Upper lobe of right lung (tissue), 1 donor: ENCODE measurements at regions of chr3 and their contacts with region 1.

Region 1: GRCh38 chr3:127959846-127960245 is 44.8 kb downstream of the KBTBD12 start:
- DNase-seq: no peak
- ATAC-seq: peak; percentile 74
- H3K4me3 ChIP-seq: no peak overlapping the region
- H3K27ac ChIP-seq: no peak overlapping the region
- H3K4me1 ChIP-seq: no peaks in the 10 kb centered on the region
- H3K27me3 ChIP-seq: no peaks in the 10 kb centered on the region
- CTCF ChIP-seq: peak; percentile 46

Region 2: GRCh38 chr3:127667119-127667681 is 292.6 kb before region 1 on chr3:
- intact Hi-C with region 1: loop called (anchors 10 kb)
- DNase-seq: peak; percentile 52
- ATAC-seq: no peak
- H3K4me3 ChIP-seq: no peak overlapping the region
- H3K27ac ChIP-seq: no peak overlapping the region
- H3K4me1 ChIP-seq: peaks cover 7% of the 10 kb centered on the region
- H3K27me3 ChIP-seq: no peaks in the 10 kb centered on the region
- CTCF ChIP-seq: no peak

Region 3: DNA sequence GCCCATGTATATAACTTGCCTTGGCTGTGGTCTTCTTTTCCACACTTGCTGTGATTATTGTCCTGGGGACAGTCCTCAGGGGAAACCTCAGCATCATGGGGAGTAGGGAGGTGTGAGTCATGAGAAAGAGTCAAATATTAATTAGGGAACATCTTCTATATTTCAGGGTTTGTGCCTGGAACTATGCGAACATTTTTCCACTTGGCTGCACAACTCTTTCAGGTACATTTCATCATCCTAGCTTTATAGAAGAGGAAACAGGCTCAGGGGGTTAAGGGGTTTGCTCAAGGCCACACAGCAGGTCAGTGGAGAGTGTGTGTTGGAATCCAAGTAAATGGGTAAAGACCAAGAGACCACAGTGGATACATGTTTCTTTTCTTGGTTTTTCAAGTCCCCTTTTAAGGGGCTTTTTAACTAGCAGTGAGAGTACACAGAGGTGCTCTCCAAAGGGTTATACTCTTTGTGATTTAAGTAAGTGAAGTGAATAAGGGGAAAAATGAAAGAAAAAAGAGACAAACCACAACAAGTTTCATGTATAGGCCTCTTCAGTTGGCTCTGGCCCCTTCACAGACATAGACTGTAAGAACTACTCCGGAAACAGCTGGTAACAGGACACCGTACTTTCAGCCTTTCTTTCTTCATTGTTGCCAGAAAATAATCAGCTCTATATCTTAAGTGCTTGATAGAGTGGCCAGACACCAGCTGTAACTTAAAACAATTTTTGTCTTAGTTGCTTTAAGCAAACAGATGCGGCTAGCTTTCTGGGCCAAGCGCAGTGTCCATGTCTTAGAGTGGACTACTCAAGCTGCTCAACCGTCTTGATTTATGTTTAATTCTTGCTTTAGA is 258.1 kb after region 1 on chr3:
- intact Hi-C with region 1: no loop called
- DNase-seq: no peak
- ATAC-seq: no peak
- H3K4me3 ChIP-seq: no peak overlapping the region
- H3K27ac ChIP-seq: no peak overlapping the region
- H3K4me1 ChIP-seq: peaks cover 6% of the 10 kb centered on the region
- H3K27me3 ChIP-seq: no peaks in the 10 kb centered on the region
- CTCF ChIP-seq: no peak